Right cardiac atrium (tissue), 5 donors: ENCODE measurements at regions of chr22 and their contacts with region 1.

Region 1: GRCh38 chr22:39502109-39502788 is at the start of gene MIEF1:
- DNase-seq: peak; percentile 98 to 99 (median 99)
- ATAC-seq: peak; percentile 97 to 98
- H3K4me3 ChIP-seq: peak within 1 kb of the TSS; percentile 86
- H3K27ac ChIP-seq: peak within 1 kb of the TSS; percentile 95
- H3K4me1 ChIP-seq: peaks cover 8% of the 10 kb centered on the region
- H3K27me3 ChIP-seq: no peaks in the 10 kb centered on the region
- total RNA-seq, gene MIEF1: 16.3 to 22.2 (median 18.7) TPM

Region 2: DNA sequence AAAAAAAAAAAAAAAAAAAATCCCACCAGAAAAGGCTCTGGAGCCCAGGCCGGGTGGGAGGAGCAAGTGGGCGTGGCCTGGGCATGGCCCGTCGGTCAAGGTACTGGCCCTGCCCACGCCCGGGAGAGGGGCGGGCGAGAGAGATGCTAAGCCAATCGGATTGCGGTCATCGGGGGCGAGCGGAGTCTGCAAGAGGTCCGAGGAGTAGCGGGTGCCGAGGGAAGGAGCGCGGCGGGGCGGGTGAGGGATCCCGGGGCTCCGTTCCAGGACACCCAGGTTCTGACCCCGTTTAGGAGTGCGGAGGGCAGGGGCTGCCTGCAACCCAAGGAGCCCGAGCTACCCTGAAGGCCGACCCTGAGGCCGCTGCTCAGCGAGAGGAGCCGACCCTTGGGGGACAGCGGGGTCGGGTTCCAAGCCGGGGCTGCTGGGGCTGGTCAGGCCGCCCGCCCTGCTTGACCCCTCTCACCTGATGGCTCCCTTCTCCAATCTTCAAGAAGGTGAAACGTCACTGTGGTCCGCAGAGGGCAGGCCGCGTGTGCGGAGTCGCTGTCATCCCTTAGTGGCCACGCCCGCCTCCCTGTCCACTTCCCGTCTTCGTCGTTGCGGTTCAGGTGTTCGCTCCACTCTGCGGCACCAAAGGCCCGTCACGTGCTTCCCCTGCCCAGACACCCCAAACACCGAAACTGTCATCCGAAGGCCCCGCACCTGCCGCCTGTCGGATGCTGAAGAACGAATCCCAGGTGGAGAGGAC is 113.8 kb before region 1 on chr22:
- intact Hi-C with region 1: loop called in 1 of 4 experiments (anchors 10 kb)
- DNase-seq: peak; percentile 90 to 96 (median 96)
- ATAC-seq: peak; percentile 94 to 95
- H3K4me3 ChIP-seq: peak overlapping the region; percentile 47
- H3K27ac ChIP-seq: no peak overlapping the region
- H3K4me1 ChIP-seq: no peaks in the 10 kb centered on the region
- H3K27me3 ChIP-seq: no peaks in the 10 kb centered on the region